OCI-LY7 (cell line): ENCODE measurements at regions of chr4 and their contacts with region 1.

Region 1: GRCh38 chr4:15457406-15458201 is 12.1 kb upstream of the CC2D2A start:
- DNase-seq: peak; percentile 65
- H3K4me3 ChIP-seq: no peak overlapping the region
- H3K27ac ChIP-seq: no peak overlapping the region
- H3K4me1 ChIP-seq: no peaks in the 10 kb centered on the region
- CTCF ChIP-seq: peak; percentile 95

Region 2: DNA sequence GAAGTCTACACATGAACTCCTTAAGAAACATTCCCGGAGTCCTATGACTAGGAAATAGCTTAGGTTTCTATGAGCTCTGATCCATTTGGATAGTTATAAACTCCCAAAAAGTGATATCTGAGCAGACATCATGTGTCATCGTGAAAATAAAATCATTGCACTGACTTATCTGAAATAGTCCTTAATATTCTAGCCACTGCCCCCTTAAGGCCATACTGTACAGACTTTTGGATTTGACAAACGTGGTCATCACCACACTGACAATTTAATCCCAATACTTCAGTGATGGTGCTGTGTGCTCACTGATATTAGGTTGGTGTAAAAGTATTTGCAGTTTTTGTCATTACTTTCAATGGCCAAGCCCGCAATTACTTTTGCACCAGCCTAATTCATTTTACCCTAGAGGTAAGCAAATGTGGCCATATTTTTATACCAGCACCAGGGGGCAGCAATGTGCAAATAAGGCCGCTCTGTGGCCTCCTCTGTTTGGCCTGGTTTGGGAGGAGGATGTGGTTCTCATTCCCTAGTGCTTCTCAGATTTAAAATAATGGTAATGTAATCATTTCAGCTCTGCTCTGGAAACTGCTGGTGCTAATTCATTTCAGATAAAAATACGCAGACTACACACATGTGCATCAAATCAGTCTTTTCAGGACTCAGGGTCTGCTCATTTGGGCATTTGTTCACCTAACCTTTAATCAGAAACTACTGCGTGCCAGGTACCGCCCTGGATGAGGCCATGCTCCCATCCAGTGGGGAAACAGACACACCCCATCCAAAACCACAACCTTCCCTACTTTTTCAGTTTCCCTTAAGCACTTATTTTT is 226.1 kb before region 1 on chr4:
- CTCF ChIA-PET with region 1: interaction called, 5 read pairs
- POLR2A ChIA-PET with region 1: interaction called, 3 read pairs
- intact Hi-C with region 1: loop called (anchors 1 kb)
- DNase-seq: peak; percentile 79
- H3K4me3 ChIP-seq: no peak overlapping the region
- H3K27ac ChIP-seq: no peak overlapping the region
- H3K4me1 ChIP-seq: no peaks in the 10 kb centered on the region
- CTCF ChIP-seq: peak; percentile 86

Region 3: DNA sequence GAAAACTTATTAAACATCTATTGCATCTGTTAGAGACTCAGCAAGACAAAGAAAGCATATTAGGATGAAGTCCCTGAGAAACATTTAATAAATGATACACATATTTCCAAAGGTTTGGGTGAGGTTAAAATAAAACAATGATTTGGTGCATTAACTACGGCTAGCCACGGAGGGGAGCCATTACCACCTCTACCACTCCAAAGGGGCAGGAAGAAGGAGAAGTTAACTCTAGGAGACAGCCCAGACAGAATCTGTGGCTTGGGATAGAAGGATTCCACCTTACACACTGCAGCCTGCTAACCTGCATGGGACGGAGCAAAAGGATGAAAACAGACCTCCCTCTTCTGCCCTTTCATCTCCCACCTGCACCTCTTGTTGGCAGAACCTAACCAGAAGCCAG is 218.9 kb before region 1 on chr4:
- CTCF ChIA-PET with region 1: no interaction called
- POLR2A ChIA-PET with region 1: no interaction called
- intact Hi-C with region 1: loop called (anchors 1 kb)
- DNase-seq: peak; percentile 30
- H3K4me3 ChIP-seq: no peak overlapping the region
- H3K27ac ChIP-seq: no peak overlapping the region
- H3K4me1 ChIP-seq: no peaks in the 10 kb centered on the region
- CTCF ChIP-seq: peak; percentile 82

Region 4: DNA sequence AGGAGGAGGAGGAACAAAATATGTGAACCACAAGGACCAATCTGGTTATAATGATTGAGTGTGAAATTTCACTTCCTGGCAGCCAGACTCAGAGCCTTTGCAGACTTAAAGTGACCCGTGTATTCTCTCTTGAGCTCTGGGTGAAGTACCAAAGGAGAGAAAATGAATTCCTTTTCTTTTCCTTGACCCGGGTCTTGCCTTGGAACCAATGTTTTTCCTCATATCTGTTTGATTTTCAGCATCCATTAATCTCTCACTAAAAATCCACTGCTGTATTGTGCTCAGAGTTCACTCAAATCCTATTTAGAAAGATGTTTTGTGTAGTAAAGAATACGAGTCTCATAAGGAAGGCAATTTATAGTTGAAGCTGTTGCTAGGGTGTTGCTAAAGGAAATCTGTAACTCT is 108.1 kb before region 1 on chr4:
- CTCF ChIA-PET with region 1: no interaction called
- POLR2A ChIA-PET with region 1: no interaction called
- intact Hi-C with region 1: loop called (anchors 5 kb)
- DNase-seq: no peak
- H3K4me3 ChIP-seq: no peak overlapping the region
- H3K27ac ChIP-seq: no peak overlapping the region
- H3K4me1 ChIP-seq: no peaks in the 10 kb centered on the region
- CTCF ChIP-seq: no peak

Region 5: DNA sequence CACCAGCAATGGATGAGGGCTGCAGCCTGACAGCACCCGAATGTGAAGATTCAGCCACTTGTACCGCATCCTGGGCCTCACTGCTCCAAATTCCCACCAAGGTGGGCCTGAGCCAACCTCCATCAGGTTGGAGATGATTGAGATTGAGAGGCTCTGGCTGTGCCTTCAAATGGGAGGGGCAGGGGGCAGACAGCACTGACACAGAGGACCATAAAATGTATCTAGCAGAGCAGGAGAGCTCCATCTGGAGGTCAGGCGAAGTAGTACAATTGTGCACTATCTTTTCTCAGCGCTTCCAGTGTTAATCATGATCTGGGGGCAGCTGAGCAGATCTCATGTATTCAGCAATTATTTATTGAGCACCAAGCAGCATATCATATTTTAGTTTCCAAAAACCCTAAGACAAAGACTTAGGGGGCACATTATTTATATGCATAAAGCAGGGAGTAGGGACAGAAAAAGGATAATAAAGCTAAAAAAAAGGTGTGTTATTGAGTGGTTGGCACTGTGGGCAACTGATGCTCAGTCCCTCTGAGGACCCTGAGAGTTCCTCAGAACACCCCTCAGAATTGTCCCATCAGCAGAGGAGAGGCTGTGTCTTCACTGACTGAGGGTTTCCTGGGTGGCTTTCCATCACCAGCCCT is 61.3 kb before region 1 on chr4:
- CTCF ChIA-PET with region 1: no interaction called
- POLR2A ChIA-PET with region 1: interaction called, 5 read pairs
- intact Hi-C with region 1: loop called (anchors 2 kb)
- DNase-seq: peak; percentile 61
- H3K4me3 ChIP-seq: no peak overlapping the region
- H3K27ac ChIP-seq: no peak overlapping the region
- H3K4me1 ChIP-seq: peaks cover 7% of the 10 kb centered on the region
- CTCF ChIP-seq: peak; percentile 85